ENCODE measurements at regions of chr9 and their contacts with region 1.

Region 1: GRCh38 chr9:15211160-15211814 is 95.7 kb downstream of the TTC39B start:
- DNase-seq: no peak

Region 2: DNA sequence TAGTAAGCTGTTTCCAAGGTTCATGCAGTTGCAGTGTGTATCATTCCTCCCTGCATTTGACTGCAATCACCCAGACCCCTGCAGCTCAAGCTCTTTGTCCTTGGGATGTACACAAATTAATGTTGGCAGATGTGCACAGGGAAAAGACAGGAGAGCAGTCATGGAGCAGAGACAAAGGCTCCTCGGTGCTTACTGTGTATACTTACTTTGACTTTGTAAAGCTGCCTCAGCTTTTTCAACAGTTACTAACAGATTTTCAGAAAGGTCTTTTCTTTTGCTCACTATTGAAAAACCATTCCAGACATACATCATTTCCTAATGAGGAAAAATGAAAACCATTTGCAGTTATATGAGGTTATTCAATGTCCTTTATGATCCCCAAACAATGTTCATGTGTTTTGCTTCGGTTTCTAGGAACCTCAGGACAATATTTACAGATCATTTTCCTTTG is 29.2 kb before region 1 on chr9:
- intact Hi-C with region 1: no loop called
- DNase-seq: no peak

Region 3: DNA sequence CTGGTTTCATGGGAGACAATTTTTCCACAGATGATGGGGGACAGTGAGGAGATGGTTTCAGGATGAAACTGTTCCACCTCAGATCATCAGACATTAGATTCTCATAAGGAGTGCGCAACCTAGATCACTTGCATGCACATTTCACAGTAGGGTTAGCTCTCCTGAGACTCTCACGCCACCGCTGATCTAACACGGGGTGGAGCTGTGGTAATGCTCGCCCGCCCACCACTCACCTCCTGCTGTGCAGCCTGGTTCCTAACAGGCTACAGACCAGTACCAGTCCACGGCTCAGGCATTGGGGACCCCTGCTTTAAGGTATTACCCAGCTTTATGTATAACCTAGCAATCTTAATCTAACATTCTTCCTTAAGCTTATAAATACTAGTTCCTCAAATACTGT is 60.1 kb after region 1 on chr9:
- intact Hi-C with region 1: no loop called
- DNase-seq: no peak

Region 4: GRCh38 chr9:15306757-15307534 is 95.7 kb after region 1 on chr9 and contains the start of gene TTC39B:
- intact Hi-C with region 1: loop called in 1 of 2 experiments (anchors 10 kb)
- DNase-seq: peak; percentile 97
- total RNA-seq, gene TTC39B: 19.7 to 30.1 TPM

Region 5: GRCh38 chr9:15422372-15423230 is 211.3 kb after region 1 on chr9 and contains the start of gene SNAPC3:
- intact Hi-C with region 1: loop called in 1 of 2 experiments (anchors 5 kb)
- DNase-seq: peak; percentile 98
- total RNA-seq, gene SNAPC3: 23.2 to 31.0 TPM